ENCODE measurements at regions of chr1 and their contacts with region 1.

Region 1: DNA sequence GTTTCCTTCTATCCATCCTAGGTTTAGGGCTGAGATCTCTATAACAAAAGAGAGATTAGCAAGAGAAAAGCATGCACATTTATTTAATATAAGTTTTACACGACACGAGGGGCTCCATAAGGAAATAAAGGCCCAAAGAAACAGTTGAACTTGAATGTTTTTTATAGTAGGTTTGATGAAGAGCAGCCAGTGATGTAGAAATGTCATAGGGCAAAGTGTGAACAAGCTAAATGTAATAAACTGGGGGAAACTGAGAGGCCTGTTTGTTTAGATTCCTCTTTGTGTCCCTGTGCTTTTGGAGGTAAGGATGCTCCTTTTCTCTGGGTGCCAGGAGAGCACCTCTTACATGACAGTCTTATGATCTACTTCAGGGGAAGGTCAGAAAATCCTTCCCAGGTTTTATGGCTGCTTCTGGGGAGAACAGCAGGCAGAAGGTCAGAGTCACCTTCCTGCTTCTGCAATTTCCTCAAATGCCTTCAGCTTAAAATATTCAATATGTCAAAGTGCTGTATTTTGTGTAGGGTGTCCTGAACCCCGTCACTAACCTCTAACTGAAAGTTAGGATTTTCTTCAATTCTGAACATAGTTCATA is 9.5 kb upstream of the HORMAD1 start:
- DNase-seq: no peak
- ATAC-seq: no peak
- H3K4me3 ChIP-seq: no peak overlapping the region
- H3K27ac ChIP-seq: no peak overlapping the region
- H3K4me1 ChIP-seq: no peaks in the 10 kb centered on the region
- H3K27me3 ChIP-seq: no peaks in the 10 kb centered on the region
- CTCF ChIP-seq: no peak
- POLR2A ChIP-seq: no peak
- RAD21 ChIP-seq: no peak

Region 2: GRCh38 chr1:150703427-150703826 is 26.8 kb before region 1 on chr1:
- CTCF ChIA-PET with region 1: no interaction called
- POLR2A ChIA-PET with region 1: no interaction called
- dilution Hi-C with region 1: no loop called
- in situ Hi-C with region 1: no loop called
- intact Hi-C with region 1: loop called (anchors 5 kb)
- DNase-seq: no peak
- ATAC-seq: no peak
- H3K4me3 ChIP-seq: no peak overlapping the region
- H3K27ac ChIP-seq: no peak overlapping the region
- H3K4me1 ChIP-seq: no peaks in the 10 kb centered on the region
- H3K27me3 ChIP-seq: peaks cover 4% of the 10 kb centered on the region; the same call in 1 of the 2 replicates
- CTCF ChIP-seq: no peak
- POLR2A ChIP-seq: no peak
- RAD21 ChIP-seq: no peak

Region 3: DNA sequence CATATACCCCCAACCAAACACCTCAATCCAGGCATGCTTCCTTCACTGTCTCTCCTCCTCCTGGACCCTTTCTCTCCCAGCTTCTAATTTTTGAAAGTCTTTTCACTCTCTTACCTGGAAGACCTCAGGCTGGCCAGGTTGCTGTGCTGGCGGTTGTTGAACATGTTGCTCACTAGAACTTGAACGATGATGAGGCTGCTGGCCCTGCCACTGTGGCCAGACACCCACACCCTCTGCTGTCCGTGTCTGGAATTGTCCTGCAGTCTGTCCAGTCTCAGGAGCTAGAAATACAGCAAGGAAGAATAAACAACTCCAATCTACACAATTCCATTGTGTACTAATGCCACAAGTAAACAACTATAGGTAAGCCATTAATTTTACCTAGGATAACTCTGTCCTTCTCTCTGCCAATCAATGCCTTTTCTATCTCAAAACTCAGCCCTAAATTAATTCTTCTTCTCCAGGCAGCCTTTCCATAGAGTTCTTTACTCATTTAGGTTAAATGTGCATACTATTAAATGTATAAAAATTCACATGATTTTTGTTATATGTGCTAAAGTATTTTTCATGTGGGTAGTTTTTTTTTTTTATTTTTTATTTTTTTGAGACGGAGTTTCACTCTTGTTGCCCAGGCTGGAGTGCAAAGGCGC is 83.0 kb after region 1 on chr1:
- CTCF ChIA-PET with region 1: no interaction called
- POLR2A ChIA-PET with region 1: no interaction called
- dilution Hi-C with region 1: no loop called
- in situ Hi-C with region 1: no loop called
- intact Hi-C with region 1: no loop called
- DNase-seq: peak; percentile 77
- ATAC-seq: peak; percentile 94
- H3K4me3 ChIP-seq: no peak overlapping the region
- H3K27ac ChIP-seq: no peak overlapping the region
- H3K4me1 ChIP-seq: peaks cover 3% of the 10 kb centered on the region; the same call in 1 of the 2 replicates
- H3K27me3 ChIP-seq: no peaks in the 10 kb centered on the region
- CTCF ChIP-seq: peak; percentile 82
- POLR2A ChIP-seq: no peak
- RAD21 ChIP-seq: peak; percentile 92